A549 (cell line): ENCODE measurements at regions of chr11 and their contacts with region 1.

Region 1: GRCh38 chr11:64185816-64186498 is at the start of gene STIP1:
- DNase-seq: peak; percentile 99 to 100
- ATAC-seq: peak; percentile 84 to 93
- H3K4me3 ChIP-seq: peak within 1 kb of the TSS; percentile 52
- H3K27ac ChIP-seq: peak within 1 kb of the TSS; percentile 79 to 96
- H3K4me1 ChIP-seq: peaks cover 26% of the 10 kb centered on the region
- CTCF ChIP-seq: no peak
- EP300 ChIP-seq: no peak
- POLR2A ChIP-seq: peak; percentile 79
- RAD21 ChIP-seq: no peak
- polyA plus RNA-seq, gene STIP1: 288 and 300 TPM in 2 replicates

Region 2: GRCh38 chr11:63845303-63845702 is 340.7 kb before region 1 on chr11:
- CTCF ChIA-PET with region 1: no interaction called
- POLR2A ChIA-PET with region 1: no interaction called
- DNase-seq: peak in 1 of 2 experiments; percentile 68
- ATAC-seq: peak; percentile 67 to 81
- H3K4me3 ChIP-seq: no peak overlapping the region
- H3K27ac ChIP-seq: peak overlapping the region; percentile 58 to 70; a peak in 5 of 6 replicates
- H3K4me1 ChIP-seq: peaks cover 47% of the 10 kb centered on the region
- CTCF ChIP-seq: no peak
- EP300 ChIP-seq: no peak
- POLR2A ChIP-seq: no peak
- RAD21 ChIP-seq: no peak

Region 3: GRCh38 chr11:64028398-64029115 is 157.4 kb before region 1 on chr11:
- CTCF ChIA-PET with region 1: no interaction called
- POLR2A ChIA-PET with region 1: no interaction called
- DNase-seq: no peak
- ATAC-seq: no peak
- H3K4me3 ChIP-seq: no peak overlapping the region
- H3K27ac ChIP-seq: no peak overlapping the region
- H3K4me1 ChIP-seq: peaks cover 8% of the 10 kb centered on the region
- CTCF ChIP-seq: no peak
- EP300 ChIP-seq: no peak
- POLR2A ChIP-seq: no peak
- RAD21 ChIP-seq: no peak

Region 4: DNA sequence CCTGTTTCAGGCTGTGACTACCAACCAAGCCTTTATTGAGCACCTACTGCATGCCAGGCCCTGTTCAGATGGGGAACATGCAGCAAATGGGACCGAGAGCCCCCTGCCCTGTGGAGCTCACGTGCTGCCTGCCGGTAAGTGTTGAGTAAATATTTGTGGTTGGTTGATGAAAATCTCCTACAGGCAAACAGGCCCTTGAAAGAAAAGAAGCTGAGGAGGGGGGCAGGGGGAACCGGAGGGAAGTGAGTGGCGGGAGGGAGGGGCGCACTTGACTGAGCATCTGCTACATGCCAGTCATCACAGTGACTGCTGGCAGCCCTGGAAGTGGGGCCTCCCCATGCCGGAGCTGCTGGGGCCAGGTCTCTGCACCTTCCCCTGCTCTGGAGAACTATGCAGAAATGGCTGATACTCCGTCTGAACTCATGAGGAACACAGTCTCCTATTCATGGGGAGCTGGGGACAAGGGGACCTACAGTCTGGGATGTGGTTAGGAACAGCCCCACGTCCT is 54.2 kb before region 1 on chr11:
- CTCF ChIA-PET with region 1: no interaction called
- POLR2A ChIA-PET with region 1: no interaction called
- DNase-seq: no peak
- ATAC-seq: no peak
- H3K4me3 ChIP-seq: no peak overlapping the region
- H3K27ac ChIP-seq: no peak overlapping the region
- H3K4me1 ChIP-seq: peaks cover 5% of the 10 kb centered on the region; the same call in 2 of the 3 replicates
- CTCF ChIP-seq: no peak
- EP300 ChIP-seq: no peak
- POLR2A ChIP-seq: no peak
- RAD21 ChIP-seq: no peak

Region 5: GRCh38 chr11:64165849-64166635 is 19.9 kb before region 1 on chr11 and contains the start of gene MACROD1:
- CTCF ChIA-PET with region 1: interaction called, 10 read pairs
- POLR2A ChIA-PET with region 1: interaction called, 22 read pairs
- DNase-seq: peak; percentile 79 to 91
- ATAC-seq: peak; percentile 91 to 95
- H3K4me3 ChIP-seq: peak within 1 kb of the TSS; percentile 81
- H3K27ac ChIP-seq: peak within 1 kb of the TSS; percentile 85 to 98
- H3K4me1 ChIP-seq: peaks cover 14% of the 10 kb centered on the region
- CTCF ChIP-seq: no peak; the same call in 2 of the 3 replicates
- EP300 ChIP-seq: no peak
- POLR2A ChIP-seq: peak; percentile 45
- RAD21 ChIP-seq: no peak
- polyA plus RNA-seq, gene MACROD1: 10.0 and 16.6 TPM in 2 replicates

Region 6: DNA sequence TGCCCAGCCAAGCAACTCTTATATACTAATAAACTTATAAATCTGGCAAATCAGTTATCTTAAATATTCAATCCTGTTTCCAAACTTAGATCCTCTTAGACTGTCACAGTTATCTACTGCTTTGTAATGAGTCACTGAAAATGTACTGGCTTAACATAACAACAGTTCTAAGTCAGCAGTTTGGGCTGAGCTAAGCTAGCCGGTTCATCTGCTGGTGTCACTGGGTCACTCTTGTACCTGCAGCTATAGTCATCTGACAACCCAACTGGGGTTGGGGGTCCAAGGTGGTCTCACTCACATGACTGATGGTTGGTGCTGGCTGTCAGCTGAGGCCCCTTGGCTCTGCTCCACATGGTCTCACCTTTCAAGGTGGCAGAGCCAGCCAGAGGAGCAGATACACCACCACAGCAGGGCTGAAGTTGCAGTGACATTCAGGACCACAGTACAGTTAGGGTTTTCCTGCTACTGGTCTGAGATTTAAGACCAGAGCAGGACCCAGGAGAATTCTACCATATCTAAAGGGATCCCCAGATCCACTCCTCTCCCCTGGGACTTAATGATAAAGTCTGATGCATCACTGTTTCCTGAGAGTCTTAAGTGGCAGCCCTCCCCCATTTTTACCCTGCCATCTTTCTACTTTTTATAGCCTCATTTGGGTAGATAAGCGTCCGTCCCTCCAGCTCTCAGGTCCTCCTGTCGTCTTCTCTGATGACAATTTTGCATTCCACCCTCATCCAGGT is 12.2 kb before region 1 on chr11:
- CTCF ChIA-PET with region 1: interaction called, 16 read pairs
- POLR2A ChIA-PET with region 1: interaction called, 4 read pairs
- DNase-seq: no peak
- ATAC-seq: peak; percentile 56 to 65; a peak in 4 of 6 replicates
- H3K4me3 ChIP-seq: no peak overlapping the region
- H3K27ac ChIP-seq: no peak overlapping the region
- H3K4me1 ChIP-seq: no peaks in the 10 kb centered on the region
- CTCF ChIP-seq: no peak
- EP300 ChIP-seq: no peak
- POLR2A ChIP-seq: no peak
- RAD21 ChIP-seq: no peak

Region 7: DNA sequence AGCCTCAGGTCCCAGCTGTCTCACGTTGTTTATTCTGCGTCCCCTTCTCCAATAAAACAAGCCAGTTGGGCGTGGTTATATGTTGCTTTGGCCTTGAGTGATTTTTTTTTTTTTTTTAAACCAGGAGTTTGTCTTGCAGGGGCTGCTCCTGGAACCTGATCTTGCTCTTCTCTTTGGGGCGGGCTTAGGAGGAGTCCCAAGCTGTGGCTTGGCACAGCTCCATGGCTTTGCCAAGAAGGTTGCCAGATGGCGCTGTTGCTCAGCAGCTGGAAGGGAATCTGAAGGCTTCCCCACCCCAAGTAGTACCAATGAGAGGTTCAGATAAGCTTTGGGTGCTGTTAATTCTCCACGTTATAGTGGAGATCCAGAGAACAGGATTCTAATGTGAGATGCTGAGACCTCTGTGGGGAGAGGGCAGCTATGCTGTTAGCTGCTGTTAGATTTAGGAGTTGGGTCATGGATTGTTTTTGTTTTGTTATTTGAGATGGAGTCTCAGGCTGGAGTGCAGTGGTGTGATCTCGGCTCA is 18.6 kb after region 1 on chr11:
- CTCF ChIA-PET with region 1: interaction called, 29 read pairs
- POLR2A ChIA-PET with region 1: interaction called, 18 read pairs
- DNase-seq: peak; percentile 89 to 94
- ATAC-seq: peak; percentile 55 to 83
- H3K4me3 ChIP-seq: no peak overlapping the region
- H3K27ac ChIP-seq: no peak overlapping the region
- H3K4me1 ChIP-seq: peaks cover 9% of the 10 kb centered on the region; the same call in 1 of the 3 replicates
- CTCF ChIP-seq: peak; percentile 77
- EP300 ChIP-seq: no peak
- POLR2A ChIP-seq: no peak
- RAD21 ChIP-seq: peak; percentile 62 to 80

Region 8: DNA sequence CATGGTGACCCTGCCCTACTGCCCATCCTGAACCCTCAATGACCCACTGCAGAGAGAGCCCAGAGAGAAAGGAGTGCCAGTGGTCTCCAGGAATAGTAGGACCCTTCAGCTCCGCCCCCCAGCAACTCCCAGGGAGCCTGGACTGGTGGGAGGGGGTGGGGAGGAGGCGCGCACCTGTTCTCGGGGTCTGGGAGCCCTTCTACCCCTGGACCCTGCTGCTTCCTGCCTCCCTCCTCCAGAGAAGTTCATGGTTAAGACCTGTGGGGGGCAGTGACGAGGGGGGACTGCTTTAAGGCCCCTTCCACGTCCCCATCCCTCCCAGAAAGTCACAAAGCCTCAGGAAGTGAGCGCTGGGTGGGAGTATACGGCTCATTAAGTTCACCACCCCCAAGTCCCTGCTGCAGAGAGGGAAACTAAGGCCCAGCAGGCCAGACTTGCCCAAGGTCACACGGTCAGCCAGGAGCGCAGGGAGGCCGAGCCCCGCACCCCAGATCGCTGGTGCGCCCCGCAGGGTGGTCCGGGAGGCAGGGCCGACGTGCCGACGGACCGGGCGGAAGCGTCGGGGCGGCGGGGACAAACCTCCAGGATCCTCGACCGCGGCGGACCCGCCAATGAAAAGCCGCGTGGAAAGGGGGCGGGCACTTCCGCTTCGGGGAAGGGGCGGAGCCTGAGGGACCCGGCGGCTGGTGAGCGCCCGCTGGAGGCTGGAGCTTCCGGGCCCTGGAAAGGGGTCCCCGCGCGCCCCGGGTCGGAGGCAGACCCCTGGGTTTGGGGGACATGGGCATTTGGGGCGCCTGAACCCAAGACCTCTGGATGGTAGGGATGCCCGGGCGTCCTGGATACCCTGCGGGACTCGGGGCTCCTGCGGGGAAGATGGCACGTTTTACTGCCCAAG is 39.9 kb after region 1 on chr11 and contains the starts of genes NUDT22 and TRPT1:
- CTCF ChIA-PET with region 1: interaction called, 7 read pairs
- POLR2A ChIA-PET with region 1: interaction called, 16 read pairs
- DNase-seq: peak; percentile 80 to 90
- ATAC-seq: peak; percentile 77 to 83
- H3K4me3 ChIP-seq: peak within 1 kb of the TSS; percentile 97
- H3K27ac ChIP-seq: peak within 1 kb of the TSS; percentile 93 to 99
- H3K4me1 ChIP-seq: peaks cover 30% of the 10 kb centered on the region
- CTCF ChIP-seq: peak; percentile 28; the same call in 2 of the 3 replicates
- EP300 ChIP-seq: no peak
- POLR2A ChIP-seq: peak; percentile 67
- RAD21 ChIP-seq: 0 out of 5 replicates have a peak, but pooled peaks of 1 of the 2 experiments have one; percentile 14
- polyA plus RNA-seq, gene NUDT22: 21.5 and 21.7 TPM in 2 replicates
- polyA plus RNA-seq, gene TRPT1: 18.6 and 25.2 TPM in 2 replicates